ENCODE measurements at regions of chr15 and their contacts with region 1.

Region 1: GRCh38 chr15:81265944-81266775 is 57.8 kb downstream of the STARD5 start:
- DNase-seq: peak; percentile 71 to 86 (median 82)
- H3K4me3 ChIP-seq: no peak overlapping the region
- H3K27ac ChIP-seq: no peak overlapping the region
- H3K4me1 ChIP-seq: no peaks in the 10 kb centered on the region
- H3K27me3 ChIP-seq: no peaks in the 10 kb centered on the region
- CTCF ChIP-seq: peak; percentile 61 to 82 (median 71)
- EP300 ChIP-seq: no peak
- POLR2A ChIP-seq: no peak

Region 2: DNA sequence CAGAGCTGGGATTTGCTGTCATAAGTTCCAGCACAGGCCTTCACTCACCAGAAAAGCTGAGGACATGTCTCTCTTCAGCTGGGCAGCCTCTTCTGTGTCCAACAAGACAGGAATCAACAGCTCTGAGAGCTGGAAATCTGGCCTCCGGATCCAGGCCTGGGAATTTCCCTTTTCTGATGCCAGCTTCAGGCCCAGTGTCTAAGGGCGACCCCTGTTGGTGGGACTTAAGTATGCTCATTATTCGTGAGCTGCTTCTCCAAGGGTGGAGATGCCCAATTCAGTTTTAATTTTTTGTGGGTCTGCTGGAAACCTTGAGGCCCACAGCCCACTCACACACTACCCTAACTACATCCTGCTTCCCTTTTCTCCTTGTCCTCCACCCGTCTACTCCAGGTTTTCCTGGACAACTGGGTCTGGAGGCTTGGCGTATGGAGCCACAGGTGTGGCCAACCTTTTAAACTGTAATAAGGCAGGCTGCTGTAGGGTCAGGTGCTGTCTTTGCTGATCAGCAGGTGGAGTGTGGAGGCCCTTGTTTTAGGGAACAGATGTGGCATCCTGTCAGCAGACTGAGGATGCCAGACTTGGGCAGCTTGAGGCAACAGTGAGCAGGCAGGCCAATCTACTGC is 489.6 kb before region 1 on chr15:
- intact Hi-C with region 1: loop called in 1 of 4 experiments (anchors 10 kb)
- DNase-seq: peak; percentile 62 to 69 (median 65)
- H3K4me3 ChIP-seq: no peak overlapping the region
- H3K27ac ChIP-seq: no peak overlapping the region
- H3K4me1 ChIP-seq: peaks cover 15% of the 10 kb centered on the region
- H3K27me3 ChIP-seq: no peaks in the 10 kb centered on the region
- CTCF ChIP-seq: peak; percentile 54 to 59 (median 56)
- EP300 ChIP-seq: no peak
- POLR2A ChIP-seq: no peak

Region 3: DNA sequence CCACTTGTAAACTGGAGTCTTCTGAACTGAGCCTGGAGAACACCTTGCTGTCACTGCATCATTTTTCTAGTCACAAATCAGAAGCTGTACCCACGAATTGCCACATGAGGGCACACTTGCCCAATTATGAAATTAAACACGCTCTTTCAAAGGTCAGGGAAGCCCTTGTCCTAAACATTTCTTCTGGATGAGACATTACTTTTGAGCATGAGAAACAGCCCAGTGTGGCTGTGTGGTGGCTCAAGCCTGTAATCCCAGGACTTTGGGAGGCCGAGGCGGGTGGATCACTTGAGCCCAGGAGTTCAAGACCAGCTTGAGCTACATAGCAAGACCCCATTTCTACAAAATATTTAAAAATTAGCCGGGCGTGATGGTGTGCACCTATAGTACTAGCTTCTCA is 159.6 kb before region 1 on chr15:
- intact Hi-C with region 1: loop called in 3 of 4 experiments (anchors 5 kb)
- DNase-seq: peak in 4 of 5 donors; percentile 19 to 57 (median 40)
- H3K4me3 ChIP-seq: no peak overlapping the region
- H3K27ac ChIP-seq: no peak overlapping the region
- H3K4me1 ChIP-seq: peaks cover 1% of the 10 kb centered on the region
- H3K27me3 ChIP-seq: no peaks in the 10 kb centered on the region
- CTCF ChIP-seq: peak; percentile 16 to 60 (median 54)
- EP300 ChIP-seq: no peak
- POLR2A ChIP-seq: no peak

Region 4: DNA sequence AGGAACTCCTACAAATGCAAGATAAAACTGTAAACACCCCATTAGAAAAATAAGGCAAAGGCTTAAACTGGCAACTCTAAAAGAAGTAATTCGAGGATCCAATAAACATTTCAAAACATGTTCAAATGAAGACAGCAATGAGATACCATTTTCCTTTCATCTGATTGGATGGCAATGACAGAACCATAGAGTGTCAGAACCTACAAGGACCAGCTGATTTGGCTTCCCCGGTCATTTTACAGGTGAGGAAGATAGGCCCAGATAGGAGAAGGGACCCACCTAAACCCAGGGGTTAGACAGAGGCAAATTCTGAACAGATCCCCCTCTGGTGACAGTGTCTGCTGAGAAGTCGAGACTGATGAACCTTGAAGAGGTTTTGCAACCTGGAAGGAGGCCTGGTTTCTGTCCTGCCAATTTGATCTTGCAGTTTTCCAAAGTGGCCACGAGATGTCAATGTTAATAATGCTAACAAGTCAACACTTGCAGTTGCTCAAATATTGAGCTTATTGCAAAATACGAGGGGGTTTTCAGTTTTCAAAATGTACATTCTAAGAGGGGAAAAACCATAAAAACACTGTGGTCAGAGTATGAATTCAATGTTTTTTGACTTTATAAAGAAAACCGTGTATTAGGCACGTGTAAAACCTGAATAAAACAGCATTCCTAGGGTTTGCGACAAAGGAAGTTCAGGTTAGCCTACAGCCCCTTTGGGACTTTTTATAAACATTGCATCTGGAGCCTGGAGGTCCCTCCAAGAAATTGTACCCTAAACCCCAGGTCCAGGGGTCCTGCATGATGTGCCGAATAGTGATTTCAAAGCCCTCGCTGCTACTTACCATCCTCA is 110.6 kb before region 1 on chr15:
- intact Hi-C with region 1: loop called in 3 of 4 experiments (anchors 2 to 5 kb)
- DNase-seq: peak in 3 of 5 donors; percentile 27 to 72 (median 43)
- H3K4me3 ChIP-seq: no peak overlapping the region
- H3K27ac ChIP-seq: no peak overlapping the region
- H3K4me1 ChIP-seq: peaks cover 1% of the 10 kb centered on the region
- H3K27me3 ChIP-seq: no peaks in the 10 kb centered on the region
- CTCF ChIP-seq: peak in 2 of 3 donors; percentile 59 to 78
- EP300 ChIP-seq: no peak
- POLR2A ChIP-seq: no peak

Region 5: GRCh38 chr15:81323944-81324881 is 58.1 kb after region 1 on chr15 and contains the start of gene STARD5:
- intact Hi-C with region 1: no loop called
- DNase-seq: peak; percentile 99
- H3K4me3 ChIP-seq: peak within 1 kb of the TSS; percentile 80
- H3K27ac ChIP-seq: peak within 1 kb of the TSS in 1 of 2 donors; percentile 39
- H3K4me1 ChIP-seq: peaks cover 8% of the 10 kb centered on the region
- H3K27me3 ChIP-seq: no peaks in the 10 kb centered on the region
- CTCF ChIP-seq: no peak
- EP300 ChIP-seq: no peak
- POLR2A ChIP-seq: peak; percentile 65
- total RNA-seq, gene STARD5: 3.8 to 8.6 (median 6.1) TPM